ENCODE measurements at regions of chr1 and their contacts with region 1.

Region 1: DNA sequence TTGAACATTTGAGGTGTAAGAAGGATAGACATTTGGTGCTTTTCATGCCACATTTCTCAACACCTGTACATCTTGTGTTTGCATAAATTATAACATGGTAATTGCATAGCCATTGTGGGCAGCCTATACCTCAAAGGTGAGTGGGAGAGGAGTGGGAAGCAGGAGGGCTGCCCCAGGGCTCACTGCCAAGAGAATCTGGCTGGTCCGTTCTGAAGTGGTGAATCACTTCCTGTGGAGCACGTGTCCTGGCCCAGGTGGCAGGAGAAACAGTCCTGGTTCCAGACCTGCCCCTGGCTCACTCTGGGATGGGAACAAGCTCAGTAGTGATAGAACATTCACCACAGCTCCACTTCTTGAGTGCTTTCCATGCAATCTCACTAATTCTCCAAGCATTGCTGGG is 11.6 kb upstream of the OLFML2B start:
- DNase-seq: no peak
- H3K4me3 Mint-ChIP-seq: no peak overlapping the region
- H3K27ac Mint-ChIP-seq: no peak overlapping the region
- H3K4me1 Mint-ChIP-seq: peaks cover 3% of the 10 kb centered on the region
- H3K27me3 Mint-ChIP-seq: peaks cover 23% of the 10 kb centered on the region

Region 2: DNA sequence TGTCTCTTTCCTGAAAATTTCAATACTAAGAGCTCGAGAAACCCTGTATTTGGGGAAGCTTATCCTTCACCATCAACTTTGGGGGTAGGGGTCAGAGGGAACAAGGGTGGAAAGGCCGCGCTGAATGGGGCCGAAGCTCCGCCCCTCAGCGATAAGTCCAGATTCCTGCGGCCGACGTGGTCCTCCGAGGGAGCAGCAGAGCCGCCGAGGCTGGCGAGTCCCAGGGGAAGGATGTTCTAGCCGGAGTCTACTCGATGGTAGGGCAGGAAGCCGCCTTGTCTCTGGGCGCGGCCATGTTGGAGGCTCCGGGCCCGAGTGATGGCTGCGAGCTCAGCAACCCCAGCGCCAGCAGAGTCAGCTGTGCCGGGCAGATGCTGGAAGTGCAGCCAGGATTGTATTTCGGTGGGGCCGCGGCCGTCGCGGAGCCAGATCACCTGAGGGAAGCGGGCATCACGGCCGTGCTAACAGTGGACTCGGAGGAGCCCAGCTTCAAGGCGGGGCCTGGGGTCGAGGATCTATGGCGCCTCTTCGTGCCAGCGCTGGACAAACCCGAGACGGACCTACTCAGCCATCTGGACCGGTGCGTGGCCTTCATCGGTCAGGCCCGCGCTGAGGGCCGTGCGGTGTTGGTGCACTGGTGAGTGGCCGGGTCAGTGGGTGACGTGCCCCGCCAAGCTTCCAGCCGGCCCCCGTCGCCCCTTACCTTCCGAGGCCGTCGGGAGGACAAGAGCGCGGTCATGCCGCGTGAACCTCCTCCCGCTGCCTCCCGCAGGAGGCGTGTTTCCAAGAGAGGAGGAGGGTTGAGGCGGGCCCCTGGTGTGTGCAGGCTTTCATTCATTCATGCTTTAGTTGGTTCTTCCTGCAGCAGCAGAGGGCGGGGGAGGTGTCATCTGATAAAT is 285.5 kb before region 1 on chr1 and contains the start of gene DUSP12:
- CTCF ChIA-PET with region 1: interaction called, 10 read pairs
- DNase-seq: peak; percentile 91
- H3K4me3 Mint-ChIP-seq: peak within 1 kb of the TSS; percentile 98
- H3K27ac Mint-ChIP-seq: peak within 1 kb of the TSS; percentile 98
- H3K4me1 Mint-ChIP-seq: peaks cover 41% of the 10 kb centered on the region
- H3K27me3 Mint-ChIP-seq: peaks cover 11% of the 10 kb centered on the region

Region 3: GRCh38 chr1:162023547-162024501 is 11.4 kb before region 1 on chr1 and contains the start of gene OLFML2B:
- CTCF ChIA-PET with region 1: interaction called, 11 read pairs
- DNase-seq: peak; percentile 76
- H3K4me3 Mint-ChIP-seq: peak within 1 kb of the TSS; percentile 80
- H3K27ac Mint-ChIP-seq: no peak within 1 kb of the TSS
- H3K4me1 Mint-ChIP-seq: peaks cover 10% of the 10 kb centered on the region
- H3K27me3 Mint-ChIP-seq: peaks cover 52% of the 10 kb centered on the region

Measured in activated naive CD4-positive, alpha-beta T cell treated with anti-CD3 and anti-CD28 coated beads, Interleukin-2, amount 10 ng/mL, durations not matched to agents 7 days and 5 days (primary cell).